SK-N-SH (cell line): ENCODE measurements at regions of chr1 and their contacts with region 1.

Region 1: DNA sequence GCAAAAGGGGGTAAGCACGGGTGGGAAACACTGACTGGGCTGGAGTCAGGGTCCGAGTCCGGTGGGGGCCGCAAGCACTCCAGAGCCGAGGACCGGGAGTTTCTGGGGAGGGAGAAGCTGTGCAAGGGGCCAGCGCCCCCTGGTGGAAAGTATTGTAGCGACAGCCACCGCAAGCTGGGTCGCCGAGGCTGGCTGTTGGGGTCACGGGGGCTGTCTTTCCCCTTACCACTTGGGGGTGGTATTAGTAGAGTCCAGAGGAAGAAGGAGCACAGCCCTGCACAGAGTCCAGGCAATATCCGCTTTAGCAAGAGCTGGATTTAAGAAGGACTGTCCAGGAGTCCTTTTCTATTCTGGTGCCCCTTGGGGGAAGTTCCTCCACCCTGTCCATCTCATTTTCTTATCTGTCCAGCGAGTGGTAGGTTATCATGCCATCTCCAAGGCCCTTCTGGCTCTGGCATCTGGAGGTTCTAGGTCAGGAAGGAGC is 17.9 kb upstream of the ETV3 start:
- DNase-seq: peak; percentile 83
- H3K4me3 ChIP-seq: peak overlapping the region in 1 of 2 experiments; percentile 20; a peak in 2 of 4 replicates
- H3K27ac ChIP-seq: no peak overlapping the region
- H3K4me1 ChIP-seq: peaks cover 15 to 34% of the 10 kb centered on the region in 2 experiments; a peak in 3 of 4 replicates
- H3K27me3 ChIP-seq: no peaks in the 10 kb centered on the region
- CTCF ChIP-seq: peak; percentile 95
- EP300 ChIP-seq: no peak
- RAD21 ChIP-seq: peak; percentile 85

Region 2: GRCh38 chr1:156860113-156860627 is 295.9 kb before region 1 on chr1:
- CTCF ChIA-PET with region 1: no interaction called
- POLR2A ChIA-PET with region 1: no interaction called
- DNase-seq: peak; percentile 87
- H3K4me3 ChIP-seq: peak overlapping the region; percentile 54 to 64
- H3K27ac ChIP-seq: peak overlapping the region in 1 of 2 experiments; percentile 97; a peak in 2 of 4 replicates
- H3K4me1 ChIP-seq: peaks cover 3 to 74% of the 10 kb centered on the region in 2 experiments; a peak in 2 of 4 replicates
- H3K27me3 ChIP-seq: peaks cover 39% of the 10 kb centered on the region
- CTCF ChIP-seq: peak; percentile 85
- EP300 ChIP-seq: no peak
- RAD21 ChIP-seq: peak; percentile 86

Region 3: GRCh38 chr1:157073944-157074767 is 81.9 kb before region 1 on chr1:
- CTCF ChIA-PET with region 1: interaction called, 586 read pairs
- POLR2A ChIA-PET with region 1: no interaction called
- DNase-seq: peak; percentile 67
- H3K4me3 ChIP-seq: peak overlapping the region in 1 of 2 experiments; percentile 19; a peak in 1 of 4 replicates
- H3K27ac ChIP-seq: no peak overlapping the region
- H3K4me1 ChIP-seq: peaks cover 0 to 8% of the 10 kb centered on the region in 2 experiments; a peak in 2 of 4 replicates
- H3K27me3 ChIP-seq: peaks cover 12% of the 10 kb centered on the region; the same call in 1 of the 2 replicates
- CTCF ChIP-seq: peak; percentile 57
- EP300 ChIP-seq: no peak
- RAD21 ChIP-seq: peak; percentile 62

Region 4: GRCh38 chr1:157099630-157100009 is 56.5 kb before region 1 on chr1 and contains the start of gene ETV3L:
- CTCF ChIA-PET with region 1: interaction called, 38 read pairs
- POLR2A ChIA-PET with region 1: no interaction called
- DNase-seq: no peak
- H3K4me3 ChIP-seq: no peak within 1 kb of the TSS
- H3K27ac ChIP-seq: no peak within 1 kb of the TSS
- H3K4me1 ChIP-seq: peaks cover 0 to 2% of the 10 kb centered on the region in 2 experiments; a peak in 1 of 4 replicates
- H3K27me3 ChIP-seq: no peaks in the 10 kb centered on the region
- CTCF ChIP-seq: no peak
- EP300 ChIP-seq: no peak
- RAD21 ChIP-seq: no peak
- polyA plus RNA-seq, gene ETV3L: not detected in 2 replicates

Region 5: GRCh38 chr1:157117527-157118057 is 38.5 kb before region 1 on chr1:
- CTCF ChIA-PET with region 1: interaction called, 27 read pairs
- POLR2A ChIA-PET with region 1: no interaction called
- DNase-seq: no peak
- H3K4me3 ChIP-seq: no peak overlapping the region
- H3K27ac ChIP-seq: no peak overlapping the region
- H3K4me1 ChIP-seq: no peaks in the 10 kb centered on the region
- H3K27me3 ChIP-seq: no peaks in the 10 kb centered on the region
- CTCF ChIP-seq: no peak
- EP300 ChIP-seq: no peak
- RAD21 ChIP-seq: no peak

Region 6: GRCh38 chr1:157138220-157139051 is 17.7 kb before region 1 on chr1 and contains the start of gene ETV3:
- CTCF ChIA-PET with region 1: interaction called, 194 read pairs
- POLR2A ChIA-PET with region 1: interaction called, 10 read pairs
- DNase-seq: peak; percentile 95
- H3K4me3 ChIP-seq: peak within 1 kb of the TSS; percentile 89 to 91
- H3K27ac ChIP-seq: peak within 1 kb of the TSS; percentile 73 to 96
- H3K4me1 ChIP-seq: peaks cover 13 to 33% of the 10 kb centered on the region in 2 experiments; a peak in 3 of 4 replicates
- H3K27me3 ChIP-seq: no peaks in the 10 kb centered on the region
- CTCF ChIP-seq: no peak
- EP300 ChIP-seq: no peak
- RAD21 ChIP-seq: no peak
- polyA plus RNA-seq, gene ETV3: 5.4 and 8.5 TPM in 2 replicates